ENCODE measurements at regions of chr17 and their contacts with region 1.

Region 1: GRCh38 chr17:68640242-68640989 is 39.2 kb upstream of the FAM20A start:
- DNase-seq: no peak
- H3K4me3 ChIP-seq: no peak overlapping the region
- H3K27ac ChIP-seq: no peak overlapping the region
- H3K4me1 ChIP-seq: no peaks in the 10 kb centered on the region
- H3K27me3 ChIP-seq: peaks cover 3% of the 10 kb centered on the region
- CTCF ChIP-seq: no peak

Region 2: DNA sequence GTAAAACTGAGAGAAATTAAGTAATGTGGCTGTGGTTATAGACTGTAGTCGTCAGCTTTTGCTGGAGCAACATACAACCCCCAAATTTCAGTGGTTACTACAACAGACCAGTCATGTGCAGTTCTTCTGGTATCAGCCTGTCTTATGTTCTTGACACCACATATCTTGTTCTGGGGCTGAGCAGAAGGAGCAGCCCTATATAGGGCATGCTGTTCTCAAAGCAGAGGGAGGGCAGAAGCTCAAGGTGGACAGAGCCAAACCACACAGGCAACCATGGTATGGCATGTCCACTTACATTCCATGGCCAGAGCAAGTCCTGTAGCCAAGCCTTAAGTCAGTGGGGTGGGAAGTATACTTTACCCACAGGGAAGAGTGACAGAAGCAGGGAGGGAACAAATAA is 120.5 kb before region 1 on chr17:
- CTCF ChIA-PET with region 1: no interaction called
- dilution Hi-C with region 1: no loop called
- in situ Hi-C with region 1: no loop called
- intact Hi-C with region 1: no loop called
- DNase-seq: no peak
- H3K4me3 ChIP-seq: no peak overlapping the region
- H3K27ac ChIP-seq: no peak overlapping the region
- H3K4me1 ChIP-seq: peaks cover 9% of the 10 kb centered on the region
- H3K27me3 ChIP-seq: no peaks in the 10 kb centered on the region
- CTCF ChIP-seq: no peak

Region 3: GRCh38 chr17:68684949-68685357 is 44.5 kb after region 1 on chr17:
- CTCF ChIA-PET with region 1: no interaction called
- dilution Hi-C with region 1: loop called (anchors 5 kb)
- in situ Hi-C with region 1: no loop called
- intact Hi-C with region 1: no loop called
- DNase-seq: no peak
- H3K4me3 ChIP-seq: no peak overlapping the region
- H3K27ac ChIP-seq: no peak overlapping the region
- H3K4me1 ChIP-seq: no peaks in the 10 kb centered on the region
- H3K27me3 ChIP-seq: no peaks in the 10 kb centered on the region
- CTCF ChIP-seq: no peak

Region 4: DNA sequence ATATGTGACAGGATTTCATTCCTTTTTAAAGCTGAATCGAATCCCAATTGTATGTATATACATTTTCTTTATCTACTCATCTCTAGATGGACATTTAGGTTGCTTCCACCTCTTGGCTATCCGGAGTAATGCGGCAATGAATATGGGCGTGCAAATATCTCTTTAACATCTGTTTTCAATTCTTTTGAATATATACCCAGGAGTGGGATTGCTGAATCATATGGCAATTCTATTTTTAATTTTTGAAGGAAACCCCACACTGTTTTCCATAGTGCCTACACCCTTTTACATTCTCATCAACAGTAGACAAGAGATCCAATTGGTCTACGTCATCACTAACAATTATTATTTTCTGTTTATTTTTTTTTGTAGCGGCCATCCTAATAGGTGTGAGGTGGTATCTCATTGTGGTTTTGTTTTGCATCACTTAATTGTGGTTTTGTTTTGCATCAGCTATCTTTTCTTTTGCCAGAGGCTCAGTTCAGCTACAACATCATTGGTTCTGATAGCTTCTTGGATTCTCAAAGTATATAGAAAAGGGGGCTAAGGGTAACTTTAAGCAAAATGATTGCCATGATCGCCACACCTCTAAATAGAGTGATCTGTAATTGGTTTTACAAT is 748.5 kb after region 1 on chr17:
- CTCF ChIA-PET with region 1: no interaction called
- dilution Hi-C with region 1: no loop called
- in situ Hi-C with region 1: no loop called
- intact Hi-C with region 1: no loop called
- DNase-seq: no peak
- H3K4me3 ChIP-seq: no peak overlapping the region
- H3K27ac ChIP-seq: no peak overlapping the region
- H3K4me1 ChIP-seq: no peaks in the 10 kb centered on the region
- H3K27me3 ChIP-seq: no peaks in the 10 kb centered on the region
- CTCF ChIP-seq: no peak

Measured in mammary epithelial cell (primary cell).